Dendritic cell treated with granulocyte-macrophage colony-stimulating factor and Interleukin-4, amounts not matched to agents 40 ng/mL and 50 ng/mL, for 4 days (primary cell): ENCODE measurements at regions of chr6 and their contacts with region 1.

Region 1: DNA sequence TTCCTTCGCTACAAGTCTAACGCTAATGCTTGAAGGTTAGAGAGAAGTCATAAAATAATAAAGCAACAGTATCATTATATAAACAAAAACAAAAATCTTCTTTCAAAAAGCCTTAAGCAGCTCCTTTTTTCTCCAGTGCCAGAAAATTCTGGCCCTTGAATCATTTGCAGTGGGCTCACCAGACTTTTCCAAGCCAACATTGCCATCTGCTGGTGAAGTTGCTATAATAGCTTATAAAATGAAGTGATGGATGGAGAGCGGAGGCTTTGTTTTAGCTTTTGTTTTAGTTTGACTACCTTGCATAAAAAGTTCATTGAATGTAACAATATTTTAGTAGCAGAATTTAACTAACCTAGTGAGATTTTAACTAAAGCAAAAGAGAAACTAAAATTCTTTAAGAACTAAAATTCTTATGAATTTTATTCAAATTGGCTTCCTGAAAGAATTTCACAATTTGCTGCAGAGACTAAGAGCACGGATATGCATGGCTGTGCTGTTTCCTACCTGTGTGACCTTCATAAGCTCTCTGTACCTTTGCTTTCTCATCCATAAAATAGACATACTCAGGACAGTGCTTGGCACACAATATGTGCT is 44.8 kb upstream of the SLC2A12 start:
- H3K4me3 Mint-ChIP-seq: no peak overlapping the region
- H3K27ac Mint-ChIP-seq: no peak overlapping the region
- H3K4me1 Mint-ChIP-seq: no peaks in the 10 kb centered on the region
- H3K27me3 Mint-ChIP-seq: peaks cover 9% of the 10 kb centered on the region

Region 2: GRCh38 chr6:132820629-132821381 is 1276.4 kb before region 1 on chr6:
- intact Hi-C with region 1: loop called (anchors 5 kb)
- H3K4me3 Mint-ChIP-seq: no peak overlapping the region
- H3K27ac Mint-ChIP-seq: peak overlapping the region; percentile 21
- H3K4me1 Mint-ChIP-seq: peaks cover 22% of the 10 kb centered on the region
- H3K27me3 Mint-ChIP-seq: peaks cover 2% of the 10 kb centered on the region

Region 3: GRCh38 chr6:132962936-132963868 is 1134.0 kb before region 1 on chr6:
- intact Hi-C with region 1: loop called (anchors 10 kb)
- H3K4me3 Mint-ChIP-seq: no peak overlapping the region
- H3K27ac Mint-ChIP-seq: no peak overlapping the region
- H3K4me1 Mint-ChIP-seq: peaks cover 13% of the 10 kb centered on the region
- H3K27me3 Mint-ChIP-seq: peaks cover 7% of the 10 kb centered on the region

Region 4: GRCh38 chr6:133804263-133804662 is 292.9 kb before region 1 on chr6:
- intact Hi-C with region 1: no loop called
- H3K4me3 Mint-ChIP-seq: no peak overlapping the region
- H3K27ac Mint-ChIP-seq: no peak overlapping the region
- H3K4me1 Mint-ChIP-seq: no peaks in the 10 kb centered on the region
- H3K27me3 Mint-ChIP-seq: no peaks in the 10 kb centered on the region

Region 5: DNA sequence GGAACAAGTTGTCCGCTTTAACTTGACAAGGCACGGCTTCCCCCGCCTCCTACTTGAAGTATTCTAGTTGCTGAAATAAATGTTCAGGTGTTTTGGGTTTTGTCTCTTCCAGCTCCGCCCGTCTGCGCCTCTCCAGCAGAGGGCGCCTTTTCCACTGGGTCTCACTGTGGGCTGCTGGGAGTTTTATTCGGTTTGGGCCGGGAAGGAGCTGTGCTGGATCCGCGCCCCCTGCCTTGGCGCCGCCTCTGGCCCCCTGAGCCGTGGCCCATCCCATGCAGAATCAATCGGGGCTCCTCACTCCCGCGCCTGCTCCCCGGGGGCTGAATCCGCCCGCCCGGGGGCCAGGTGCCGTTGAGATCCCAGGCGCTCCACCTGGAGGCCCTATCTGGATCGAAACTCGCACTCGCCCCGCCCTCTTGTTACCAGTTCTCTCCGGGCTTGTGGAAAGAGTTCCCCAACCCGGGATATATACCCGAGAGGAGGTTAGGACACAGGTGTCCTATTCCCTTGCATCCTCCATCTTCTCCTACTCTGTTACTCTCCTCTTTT is 259.3 kb before region 1 on chr6:
- intact Hi-C with region 1: loop called (anchors 5 kb)
- H3K4me3 Mint-ChIP-seq: peak overlapping the region; percentile 66
- H3K27ac Mint-ChIP-seq: no peak overlapping the region
- H3K4me1 Mint-ChIP-seq: peaks cover 6% of the 10 kb centered on the region
- H3K27me3 Mint-ChIP-seq: peaks cover 17% of the 10 kb centered on the region

Region 6: GRCh38 chr6:133923938-133924593 is 173.1 kb before region 1 on chr6:
- intact Hi-C with region 1: loop called (anchors 1 kb)
- H3K4me3 Mint-ChIP-seq: no peak overlapping the region
- H3K27ac Mint-ChIP-seq: no peak overlapping the region
- H3K4me1 Mint-ChIP-seq: no peaks in the 10 kb centered on the region
- H3K27me3 Mint-ChIP-seq: peaks cover 43% of the 10 kb centered on the region

Region 7: DNA sequence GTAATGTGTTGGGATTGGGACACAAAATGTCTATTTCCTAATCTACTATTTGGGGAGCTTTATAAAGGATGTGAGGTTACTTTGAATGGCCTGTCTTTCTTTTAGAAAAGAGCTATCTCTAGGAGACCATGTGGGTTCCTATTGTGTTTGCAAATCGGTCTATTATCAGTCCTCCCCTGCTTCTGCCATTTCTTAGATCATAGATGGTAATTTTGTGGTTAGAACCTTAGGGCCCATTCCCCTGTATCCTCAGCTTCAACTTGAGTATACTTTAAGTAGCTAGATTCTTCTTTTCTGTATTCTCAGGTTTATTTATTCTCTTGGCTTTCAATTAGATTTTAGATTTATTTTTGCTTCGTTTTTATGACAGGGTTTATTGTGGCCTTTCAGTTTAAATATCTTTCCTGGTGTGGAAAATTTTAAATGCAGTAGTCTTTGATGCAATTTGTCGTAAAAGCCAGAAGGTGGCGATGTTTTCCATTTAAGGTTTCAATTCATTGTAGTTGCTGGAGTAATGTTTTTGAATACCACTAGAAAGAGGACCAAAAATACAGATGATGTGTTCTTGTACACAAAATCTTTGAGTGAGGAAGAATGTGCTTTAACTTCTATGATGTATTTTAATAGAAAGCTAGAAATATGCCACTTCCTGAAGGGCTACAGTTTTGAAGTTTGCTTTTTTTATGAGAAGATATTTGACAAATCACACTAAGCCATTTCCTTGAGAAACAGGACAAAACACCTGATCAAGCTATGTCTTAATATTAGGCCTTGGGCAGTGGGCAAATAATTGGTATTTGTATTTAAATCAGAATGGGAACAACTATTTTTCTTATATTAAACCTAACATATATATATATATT is 123.9 kb before region 1 on chr6:
- intact Hi-C with region 1: loop called (anchors 2 kb)
- H3K4me3 Mint-ChIP-seq: no peak overlapping the region
- H3K27ac Mint-ChIP-seq: no peak overlapping the region
- H3K4me1 Mint-ChIP-seq: peaks cover 17% of the 10 kb centered on the region
- H3K27me3 Mint-ChIP-seq: no peaks in the 10 kb centered on the region

Region 8: GRCh38 chr6:134026597-134026996 is 70.6 kb before region 1 on chr6:
- intact Hi-C with region 1: no loop called
- H3K4me3 Mint-ChIP-seq: no peak overlapping the region
- H3K27ac Mint-ChIP-seq: no peak overlapping the region
- H3K4me1 Mint-ChIP-seq: peaks cover 14% of the 10 kb centered on the region
- H3K27me3 Mint-ChIP-seq: no peaks in the 10 kb centered on the region